Right ventricle myocardium superior (tissue), 1 donor: ENCODE measurements at regions of chr17 and their contacts with region 1.

Region 1: GRCh38 chr17:74659898-74660297 is 36.4 kb upstream of the CD300E start:
- DNase-seq: no peak
- ATAC-seq: no peak

Region 2: DNA sequence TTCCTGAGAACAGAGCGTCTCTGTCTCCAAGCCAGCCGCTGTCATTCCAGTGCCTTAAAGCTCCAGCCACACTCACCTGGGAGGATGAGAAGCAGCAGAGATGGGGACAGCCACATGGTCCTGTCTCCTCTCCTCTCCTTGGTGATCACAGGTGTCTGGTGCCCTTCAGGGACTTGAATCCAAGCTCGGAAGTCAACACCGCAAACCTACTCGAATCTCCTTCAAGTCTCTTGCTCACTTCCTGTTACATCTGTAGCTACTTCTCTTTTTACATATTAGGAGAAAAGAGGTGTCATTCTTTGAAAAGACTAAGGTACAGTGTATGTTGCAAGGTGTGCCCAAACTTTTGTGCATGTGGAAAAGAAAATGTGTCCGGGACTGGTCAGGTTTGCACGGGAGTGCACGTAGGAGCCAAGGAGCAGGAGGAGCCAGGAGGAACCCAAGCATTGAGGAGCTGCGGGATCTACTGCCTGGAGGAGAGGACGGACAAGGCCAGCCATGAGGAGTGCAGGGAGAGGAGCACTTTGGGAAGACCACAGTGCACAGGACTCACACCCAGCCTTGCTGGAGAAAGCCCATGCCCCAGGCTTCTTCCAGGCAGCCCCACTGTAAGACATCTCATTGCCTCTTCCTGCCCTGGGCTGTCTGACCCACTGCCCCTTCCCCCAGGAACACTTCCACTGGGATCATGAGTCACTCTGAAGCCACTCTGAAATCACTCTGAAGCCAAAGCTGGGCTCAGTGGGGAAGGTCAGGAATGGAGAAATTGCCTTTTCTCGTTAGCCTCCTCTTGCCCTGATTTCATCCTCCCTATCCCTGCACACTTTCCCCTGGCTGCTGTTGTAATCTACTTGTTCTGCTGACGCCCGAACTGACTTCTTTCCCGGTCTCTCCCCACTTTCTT is 67.6 kb before region 1 on chr17 and contains the start of gene CD300LD:
- intact Hi-C with region 1: no loop called
- DNase-seq: no peak
- ATAC-seq: no peak
- total RNA-seq, gene CD300LD: not detected

Region 3: GRCh38 chr17:74736513-74737298 is 76.8 kb after region 1 on chr17 and contains the start of gene RAB37:
- intact Hi-C with region 1: loop called (anchors 10 kb)
- DNase-seq: peak; percentile 78
- ATAC-seq: peak; percentile 81
- total RNA-seq, gene RAB37: 4.1 TPM